ENCODE measurements at regions of chr2 and their contacts with region 1.

Region 1: DNA sequence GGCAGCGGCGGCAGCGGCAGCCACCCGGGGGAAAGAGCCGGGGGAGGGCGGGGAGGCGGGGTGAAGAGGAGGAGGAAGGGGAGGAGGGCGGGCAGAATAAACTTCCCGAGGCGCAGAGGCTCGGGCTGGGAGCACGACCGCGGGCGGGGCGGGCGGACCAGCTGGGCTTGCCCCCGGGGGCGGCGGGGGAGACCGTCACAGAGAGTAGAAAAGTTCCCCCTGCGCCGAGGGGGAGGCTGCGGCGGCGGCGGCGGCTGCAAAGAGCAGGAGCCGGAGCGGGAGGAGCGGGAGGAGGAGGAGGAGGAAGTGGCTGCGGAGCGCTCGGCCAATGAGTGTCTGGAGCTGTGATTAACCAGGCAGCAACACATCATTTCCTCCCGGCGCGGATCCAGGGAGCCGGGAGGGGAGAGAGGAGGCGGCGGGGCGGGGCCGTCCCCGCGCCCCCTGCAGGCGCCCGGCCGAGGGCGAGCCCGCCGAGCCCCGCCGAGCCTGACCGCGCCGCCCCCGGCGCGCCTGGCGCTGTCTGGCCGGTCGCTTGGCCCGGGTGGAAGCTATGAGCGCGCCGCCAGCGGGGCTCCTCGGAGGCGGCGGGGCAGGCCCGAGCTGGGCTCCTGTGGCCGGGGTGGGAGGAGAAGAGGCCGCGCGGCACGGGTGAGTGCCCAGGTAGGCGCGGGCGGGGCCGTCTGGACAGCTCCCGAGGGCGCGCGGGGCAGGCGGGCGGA is at the start of gene ACVR1:
- DNase-seq: peak; percentile 92 to 97 (median 96)
- ATAC-seq: peak; percentile 88 to 94 (median 90)
- H3K4me3 ChIP-seq: peak within 1 kb of the TSS; percentile 67 to 88 (median 77)
- H3K27ac ChIP-seq: peak within 1 kb of the TSS; percentile 96 to 99 (median 97)
- H3K4me1 ChIP-seq: peaks cover 3 to 47% (median 18%) of the 10 kb centered on the region in 3 donors
- H3K27me3 ChIP-seq: no peaks in the 10 kb centered on the region
- CTCF ChIP-seq: no peak
- total RNA-seq, gene ACVR1: 9.8 to 25.2 (median 12.9) TPM

Region 2: GRCh38 chr2:156864325-156864724 is 1011.9 kb before region 1 on chr2:
- intact Hi-C with region 1: no loop called
- DNase-seq: no peak
- ATAC-seq: no peak
- H3K4me3 ChIP-seq: no peak overlapping the region
- H3K27ac ChIP-seq: no peak overlapping the region
- H3K4me1 ChIP-seq: no peaks in the 10 kb centered on the region
- H3K27me3 ChIP-seq: peaks cover 0 to 3% (median 0%) of the 10 kb centered on the region in 4 donors
- CTCF ChIP-seq: no peak

Region 3: GRCh38 chr2:157784169-157784822 is 91.9 kb before region 1 on chr2:
- intact Hi-C with region 1: loop called in 1 of 3 experiments (anchors 10 kb)
- DNase-seq: peak; percentile 70 to 84 (median 76)
- ATAC-seq: peak; percentile 86 to 92 (median 90)
- H3K4me3 ChIP-seq: peak overlapping the region in 1 of 4 donors; percentile 13
- H3K27ac ChIP-seq: peak overlapping the region; percentile 70 to 85 (median 78)
- H3K4me1 ChIP-seq: peaks cover 23 to 52% (median 52%) of the 10 kb centered on the region in 3 donors
- H3K27me3 ChIP-seq: no peaks in the 10 kb centered on the region
- CTCF ChIP-seq: no peak

Measured in pancreas (tissue), 10 donors.